ENCODE measurements at regions of chr2 and their contacts with region 1.

Region 1: DNA sequence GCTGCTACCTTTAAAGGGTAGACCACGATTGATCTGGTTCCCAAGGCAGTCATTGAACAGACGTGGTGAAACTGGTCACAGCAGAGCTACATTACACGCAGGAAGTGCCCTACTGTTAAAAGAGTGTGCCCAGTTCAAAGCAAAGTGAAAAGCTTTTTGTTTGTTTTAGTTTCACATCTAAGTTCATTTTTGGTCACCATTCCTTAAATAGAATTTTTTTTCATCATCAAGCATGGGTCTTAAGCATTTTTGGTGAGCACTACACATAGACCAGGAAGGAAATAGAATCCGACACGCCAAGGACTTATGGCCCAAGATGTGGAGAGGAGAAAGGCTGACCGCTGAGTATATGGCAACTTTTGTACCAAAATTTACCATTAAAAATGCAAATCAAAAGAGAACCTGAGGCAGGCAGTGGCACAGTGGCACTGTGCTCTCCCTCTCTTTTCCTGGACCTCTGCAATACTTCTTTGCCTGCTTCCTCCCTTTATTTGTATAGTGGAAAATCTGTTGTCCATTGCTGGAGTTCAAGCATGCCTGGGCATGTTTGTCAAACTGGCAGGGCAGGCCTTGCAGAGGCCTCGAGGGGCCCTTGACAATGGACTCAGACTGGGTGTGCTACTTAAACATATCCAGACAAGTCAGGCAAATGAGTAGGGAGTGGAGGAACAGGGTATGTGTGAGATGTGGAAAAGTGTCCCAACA is 42.6 kb upstream of the HNRNPA3 start:
- DNase-seq: no peak
- ATAC-seq: no peak
- H3K4me3 ChIP-seq: no peak overlapping the region
- H3K4me3 Mint-ChIP-seq: no peak overlapping the region
- H3K27ac ChIP-seq: no peak overlapping the region
- H3K27ac Mint-ChIP-seq: no peak overlapping the region
- H3K4me1 ChIP-seq: peaks cover 11% of the 10 kb centered on the region
- H3K4me1 Mint-ChIP-seq: peaks cover 17% of the 10 kb centered on the region
- H3K27me3 ChIP-seq: no peaks in the 10 kb centered on the region
- H3K27me3 Mint-ChIP-seq: no peaks in the 10 kb centered on the region
- CTCF ChIP-seq: no peak

Region 2: DNA sequence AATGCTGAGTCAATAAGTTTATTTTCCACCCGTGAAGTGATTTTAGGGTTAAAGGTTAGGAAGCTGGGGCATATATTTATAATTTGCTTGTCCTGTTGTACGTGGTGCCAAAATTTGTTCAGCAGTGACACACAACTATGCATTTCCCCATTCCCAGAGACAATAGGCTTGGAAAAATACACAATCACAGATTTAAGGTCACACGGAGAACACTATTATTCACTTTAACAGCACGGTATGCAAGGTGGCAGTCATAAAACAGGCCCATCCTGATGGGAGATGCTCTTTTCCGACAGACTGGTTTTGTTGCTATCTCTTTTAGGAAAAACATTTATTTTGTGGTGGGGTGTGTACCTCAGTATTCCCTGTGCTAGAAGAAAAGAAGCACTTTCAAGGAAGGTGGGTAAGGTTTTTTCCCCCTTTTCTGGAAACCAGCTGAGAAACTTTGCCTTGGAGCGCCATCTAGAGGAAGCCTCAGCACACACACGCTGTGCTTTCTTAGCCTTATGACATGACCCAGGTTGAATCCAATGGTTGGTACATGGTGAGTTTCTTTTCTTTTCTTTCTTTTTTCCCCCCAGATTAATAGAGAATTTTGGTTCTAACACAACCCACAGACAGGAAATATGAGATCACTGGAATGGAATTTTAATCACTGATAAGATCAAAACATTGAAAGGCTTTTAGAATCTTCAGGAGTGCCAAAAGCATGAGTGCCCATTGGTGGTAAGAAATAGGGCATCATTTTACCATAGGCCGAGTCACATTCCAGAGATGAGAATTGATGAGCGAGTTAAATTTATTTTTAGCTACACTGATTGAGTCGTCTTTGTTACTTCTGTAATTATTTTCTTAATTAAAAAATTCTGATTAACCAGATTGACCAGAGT is 554.7 kb after region 1 on chr2:
- CTCF ChIA-PET with region 1: interaction called, 4 read pairs
- POLR2A ChIA-PET with region 1: interaction called, 3 read pairs
- intact Hi-C with region 1: loop called (anchors 5 kb)
- DNase-seq: peak; percentile 3 to 60 (median 11)
- ATAC-seq: no peak
- H3K4me3 ChIP-seq: no peak overlapping the region
- H3K4me3 Mint-ChIP-seq: no peak overlapping the region
- H3K27ac ChIP-seq: no peak overlapping the region
- H3K27ac Mint-ChIP-seq: no peak overlapping the region
- H3K4me1 ChIP-seq: no peaks in the 10 kb centered on the region
- H3K4me1 Mint-ChIP-seq: no peaks in the 10 kb centered on the region
- H3K27me3 ChIP-seq: peaks cover 5 to 7% of the 10 kb centered on the region in 2 experiments
- H3K27me3 Mint-ChIP-seq: peaks cover 37% of the 10 kb centered on the region
- CTCF ChIP-seq: peak; percentile 69